Activated T-helper 1 cell treated with anti-CD3 and anti-CD28 coated beads, Interleukin-12 subunit alpha, Interleukin-12 subunit beta, Interleukin-2, Interleukin-4 antibody, amounts not matched to agents 30 ng/mL and 10 ng/mL and 1 ng/mL, durations not matched to agents 14 hours and 24 hours and 36 hours (primary cell): ENCODE measurements at regions of chr2 and their contacts with region 1.

Region 1: DNA sequence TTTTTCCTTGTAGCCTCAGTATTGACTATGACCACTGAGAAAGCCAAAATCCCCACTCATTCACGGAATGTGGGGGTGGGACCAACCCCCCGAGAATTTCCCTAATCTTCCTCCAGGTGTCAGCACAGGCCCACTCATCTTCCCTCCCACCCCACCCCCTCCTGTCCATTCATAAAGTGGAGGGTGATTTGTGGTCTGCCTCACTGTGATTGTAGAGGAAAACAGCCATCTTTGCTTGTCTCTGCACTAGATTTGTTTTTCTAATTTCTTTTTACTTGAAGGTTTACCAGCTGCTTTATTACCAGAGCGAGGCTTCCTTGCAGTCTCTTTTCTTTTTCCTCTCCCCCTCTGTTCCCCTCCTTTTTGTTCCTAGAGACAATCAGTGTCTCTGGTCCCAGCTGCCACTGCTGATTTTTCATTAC is 171.8 kb downstream of the ICOS start:
- DNase-seq: peak; percentile 18
- H3K4me3 Mint-ChIP-seq: peak overlapping the region; percentile 60
- H3K27ac Mint-ChIP-seq: peak overlapping the region; percentile 90
- H3K4me1 Mint-ChIP-seq: peaks cover 81% of the 10 kb centered on the region
- H3K27me3 Mint-ChIP-seq: no peaks in the 10 kb centered on the region

Region 2: DNA sequence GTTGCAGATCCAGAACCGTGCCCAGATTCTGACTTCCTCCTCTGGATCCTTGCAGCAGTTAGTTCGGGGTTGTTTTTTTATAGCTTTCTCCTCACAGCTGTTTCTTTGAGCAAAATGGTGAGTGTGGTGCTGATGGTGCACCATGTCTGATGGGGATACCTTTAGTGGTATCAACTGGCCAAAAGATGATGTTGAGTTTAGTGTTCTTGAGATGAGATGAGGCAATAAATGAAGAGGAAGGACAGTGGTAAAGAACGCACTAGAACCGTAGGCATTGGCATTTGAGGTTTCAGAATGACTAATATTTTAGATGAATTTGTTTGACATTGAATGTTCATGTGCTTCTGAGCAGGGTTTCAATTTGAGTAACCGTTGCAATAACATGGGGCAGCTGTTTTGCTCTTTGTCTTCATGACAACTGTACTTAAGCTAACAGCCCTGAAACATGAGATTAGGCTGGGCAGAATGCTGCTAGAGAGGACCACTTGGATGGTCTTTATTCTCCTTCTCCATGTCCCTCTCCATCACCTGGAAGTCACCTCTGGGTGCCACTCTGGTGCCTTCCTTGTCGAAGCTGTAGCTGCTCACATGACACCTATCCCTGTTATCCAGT is 236.9 kb before region 1 on chr2:
- intact Hi-C with region 1: loop called (anchors 1 kb)
- DNase-seq: peak; percentile 67
- H3K4me3 Mint-ChIP-seq: peak overlapping the region; percentile 95
- H3K27ac Mint-ChIP-seq: peak overlapping the region; percentile 99
- H3K4me1 Mint-ChIP-seq: peaks cover 82% of the 10 kb centered on the region
- H3K27me3 Mint-ChIP-seq: no peaks in the 10 kb centered on the region

Region 3: DNA sequence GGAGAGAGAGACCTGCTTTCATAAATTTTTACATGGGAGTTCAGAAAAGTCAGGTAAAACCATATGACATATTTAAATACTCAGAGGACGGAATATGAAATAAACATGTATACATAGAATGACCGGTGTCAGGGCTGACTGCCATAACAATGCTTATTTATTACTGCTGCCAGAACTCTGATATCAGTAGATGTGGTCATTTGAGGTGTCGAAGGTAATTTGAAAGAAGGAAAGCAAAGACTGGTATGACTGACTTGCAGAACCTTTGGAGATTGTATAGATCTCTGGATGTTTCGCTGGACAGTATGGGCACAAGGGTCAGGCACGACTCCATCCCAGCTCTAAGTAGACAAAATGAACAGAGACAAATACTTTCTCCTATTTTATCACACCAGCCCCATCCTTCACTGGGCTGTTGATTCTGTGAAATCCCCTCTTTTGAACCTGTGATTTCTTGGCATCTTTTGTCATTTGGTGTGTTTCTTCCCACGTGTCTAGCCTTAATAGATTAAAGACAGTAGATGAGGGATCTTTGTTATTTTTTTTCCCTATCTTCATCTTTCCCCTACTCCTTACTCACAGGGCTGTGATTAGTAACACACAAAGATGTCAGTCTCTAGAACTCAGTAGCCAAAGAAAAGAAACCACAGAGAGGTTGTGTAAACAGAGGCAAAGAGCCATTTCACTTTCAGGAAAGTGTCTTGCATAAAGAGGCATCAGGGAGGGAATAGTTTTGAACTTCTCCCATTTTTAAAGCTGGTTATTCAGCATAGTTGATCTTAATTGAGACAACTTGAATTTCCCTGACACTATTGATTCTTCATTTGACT is 110.1 kb before region 1 on chr2:
- intact Hi-C with region 1: loop called (anchors 1 kb)
- DNase-seq: no peak
- H3K4me3 Mint-ChIP-seq: peak overlapping the region; percentile 47
- H3K27ac Mint-ChIP-seq: peak overlapping the region; percentile 83
- H3K4me1 Mint-ChIP-seq: peaks cover 66% of the 10 kb centered on the region
- H3K27me3 Mint-ChIP-seq: no peaks in the 10 kb centered on the region

Region 4: DNA sequence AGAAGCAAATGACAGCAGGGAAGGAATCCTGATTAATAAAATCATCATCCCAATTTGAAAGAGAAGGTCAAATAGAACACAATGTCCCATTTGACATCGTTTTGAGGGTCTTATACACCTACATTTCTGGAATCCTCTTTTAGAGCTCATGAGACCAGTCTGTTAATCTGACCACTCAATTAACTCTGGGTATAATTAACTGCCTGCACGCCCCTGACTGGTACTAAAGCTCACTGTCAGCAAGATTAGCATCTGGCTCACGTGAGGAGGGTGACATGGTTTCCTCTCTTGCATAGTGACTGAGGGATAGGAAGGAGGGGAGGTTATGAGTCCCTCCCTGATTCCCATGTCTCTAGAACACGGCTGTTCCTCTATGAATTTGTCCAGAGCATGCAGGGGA is 47.5 kb before region 1 on chr2:
- intact Hi-C with region 1: no loop called
- DNase-seq: no peak
- H3K4me3 Mint-ChIP-seq: no peak overlapping the region
- H3K27ac Mint-ChIP-seq: no peak overlapping the region
- H3K4me1 Mint-ChIP-seq: no peaks in the 10 kb centered on the region
- H3K27me3 Mint-ChIP-seq: peaks cover 2% of the 10 kb centered on the region

Region 5: GRCh38 chr2:204127238-204127637 is 18.9 kb after region 1 on chr2:
- intact Hi-C with region 1: loop called (anchors 2 kb)
- DNase-seq: no peak
- H3K4me3 Mint-ChIP-seq: no peak overlapping the region
- H3K27ac Mint-ChIP-seq: no peak overlapping the region
- H3K4me1 Mint-ChIP-seq: peaks cover 19% of the 10 kb centered on the region
- H3K27me3 Mint-ChIP-seq: peaks cover 11% of the 10 kb centered on the region

Region 6: GRCh38 chr2:204251158-204251997 is 143.0 kb after region 1 on chr2:
- intact Hi-C with region 1: loop called (anchors 2 kb)
- DNase-seq: no peak
- H3K4me3 Mint-ChIP-seq: no peak overlapping the region
- H3K27ac Mint-ChIP-seq: no peak overlapping the region
- H3K4me1 Mint-ChIP-seq: no peaks in the 10 kb centered on the region
- H3K27me3 Mint-ChIP-seq: peaks cover 9% of the 10 kb centered on the region

Region 7: GRCh38 chr2:204315236-204315662 is 206.9 kb after region 1 on chr2:
- intact Hi-C with region 1: no loop called
- DNase-seq: no peak
- H3K4me3 Mint-ChIP-seq: no peak overlapping the region
- H3K27ac Mint-ChIP-seq: no peak overlapping the region
- H3K4me1 Mint-ChIP-seq: peaks cover 7% of the 10 kb centered on the region
- H3K27me3 Mint-ChIP-seq: peaks cover 21% of the 10 kb centered on the region

Region 8: GRCh38 chr2:204608237-204608939 is 500.0 kb after region 1 on chr2:
- intact Hi-C with region 1: no loop called
- DNase-seq: no peak
- H3K4me3 Mint-ChIP-seq: no peak overlapping the region
- H3K27ac Mint-ChIP-seq: no peak overlapping the region
- H3K4me1 Mint-ChIP-seq: no peaks in the 10 kb centered on the region
- H3K27me3 Mint-ChIP-seq: peaks cover 7% of the 10 kb centered on the region

Region 9: GRCh38 chr2:205612636-205613035 is 1504.3 kb after region 1 on chr2:
- intact Hi-C with region 1: loop called (anchors 1 kb)
- DNase-seq: peak; percentile 21
- H3K4me3 Mint-ChIP-seq: peak overlapping the region; percentile 59
- H3K27ac Mint-ChIP-seq: peak overlapping the region; percentile 92
- H3K4me1 Mint-ChIP-seq: peaks cover 38% of the 10 kb centered on the region
- H3K27me3 Mint-ChIP-seq: peaks cover 12% of the 10 kb centered on the region